ENCODE measurements at regions of chr2 and their contacts with region 1.

Region 1: DNA sequence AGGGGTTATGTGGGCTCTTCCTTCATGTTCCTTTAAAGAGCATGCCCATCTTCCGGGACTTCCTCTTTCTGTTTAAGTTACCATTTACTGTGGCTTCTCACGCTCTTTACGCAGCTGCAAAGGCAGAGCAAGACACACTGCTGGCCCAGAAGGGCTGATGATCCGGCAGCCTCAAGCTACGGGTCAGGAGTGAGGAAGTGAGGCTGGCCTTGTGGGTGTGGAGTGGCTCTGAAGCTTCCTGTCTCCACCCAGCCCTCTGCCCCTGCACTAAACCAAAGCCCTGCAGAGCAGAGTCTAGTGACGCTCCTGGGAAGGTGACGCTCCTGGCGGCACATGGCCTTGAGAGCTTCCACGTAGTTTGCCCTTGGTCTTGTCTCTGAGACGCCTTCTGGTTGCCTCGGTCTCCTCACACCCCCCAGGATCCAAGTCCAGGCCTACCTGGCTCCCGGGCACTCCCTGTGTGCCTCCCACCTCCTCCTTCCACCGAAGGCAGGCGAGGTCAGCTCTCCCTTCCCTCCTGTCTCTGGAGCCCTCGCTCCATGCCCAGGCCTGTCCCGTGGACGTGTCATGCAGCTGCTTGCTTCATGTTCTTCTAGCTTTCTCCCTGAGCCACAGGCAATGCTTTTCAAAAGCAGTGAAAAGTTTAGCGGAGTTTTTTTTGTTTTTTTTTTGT is 50.3 kb downstream of the ARL4C start:
- DNase-seq: peak; percentile 89
- H3K4me3 Mint-ChIP-seq: peak overlapping the region; percentile 66
- H3K27ac Mint-ChIP-seq: peak overlapping the region; percentile 95
- H3K4me1 Mint-ChIP-seq: peaks cover 73% of the 10 kb centered on the region
- H3K27me3 Mint-ChIP-seq: no peaks in the 10 kb centered on the region

Region 2: DNA sequence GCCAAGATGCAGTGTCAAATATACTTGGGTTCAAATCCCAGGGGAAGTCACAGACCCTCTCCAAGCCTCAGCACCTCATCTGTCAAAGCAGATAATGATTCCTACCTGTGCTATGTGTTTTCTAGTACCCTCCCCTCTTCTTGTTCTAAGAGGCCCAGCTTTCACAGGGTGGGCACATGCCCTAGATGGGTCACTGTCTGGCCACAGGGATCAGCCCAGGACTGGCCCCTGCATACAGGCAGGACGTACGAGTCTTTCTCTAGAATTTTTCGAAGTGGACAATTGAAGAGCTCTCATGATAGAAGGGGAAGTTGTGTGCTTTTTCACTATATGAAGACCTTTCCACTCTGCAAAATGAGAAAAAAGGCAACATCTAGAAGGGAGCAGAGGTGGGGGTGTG is 28.1 kb after region 1 on chr2:
- CTCF ChIA-PET with region 1: no interaction called
- POLR2A ChIA-PET with region 1: interaction called, 8 read pairs
- intact Hi-C with region 1: loop called (anchors 1 kb)
- DNase-seq: no peak
- H3K4me3 Mint-ChIP-seq: no peak overlapping the region
- H3K27ac Mint-ChIP-seq: peak overlapping the region; percentile 88
- H3K4me1 Mint-ChIP-seq: peaks cover 57% of the 10 kb centered on the region
- H3K27me3 Mint-ChIP-seq: no peaks in the 10 kb centered on the region

Region 3: DNA sequence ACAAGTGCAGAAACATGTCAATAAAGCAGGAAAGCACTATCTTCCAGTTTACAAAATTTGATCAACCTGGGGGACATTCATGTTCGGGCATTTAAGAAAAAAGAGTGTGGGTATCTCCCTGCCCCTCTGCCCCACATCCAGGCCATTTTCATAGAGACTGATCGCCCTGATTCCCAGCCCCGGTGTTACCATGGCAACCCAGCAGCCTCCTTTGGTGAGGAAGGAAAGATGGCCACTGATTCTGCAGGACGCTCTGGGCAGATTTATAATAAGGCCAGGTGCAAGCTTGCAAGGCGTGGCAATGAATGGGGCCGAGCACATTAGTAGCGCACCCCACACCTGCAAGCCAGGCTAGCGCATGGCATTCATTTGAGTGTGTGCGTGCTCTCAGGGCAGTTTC is 87.1 kb after region 1 on chr2:
- CTCF ChIA-PET with region 1: no interaction called
- POLR2A ChIA-PET with region 1: no interaction called
- intact Hi-C with region 1: no loop called
- DNase-seq: no peak
- H3K4me3 Mint-ChIP-seq: no peak overlapping the region
- H3K27ac Mint-ChIP-seq: no peak overlapping the region
- H3K4me1 Mint-ChIP-seq: no peaks in the 10 kb centered on the region
- H3K27me3 Mint-ChIP-seq: peaks cover 18% of the 10 kb centered on the region